Activated CD4-positive, alpha-beta memory T cell treated with anti-CD3 and anti-CD28 coated beads for 36 hours (primary cell): ENCODE measurements at regions of chr15 and their contacts with region 1.

Region 1: GRCh38 chr15:78437762-78438302 is at the start of gene IREB2:
- DNase-seq: peak; percentile 99
- H3K4me3 Mint-ChIP-seq: peak within 1 kb of the TSS; percentile 97
- H3K27ac Mint-ChIP-seq: peak within 1 kb of the TSS; percentile 97
- H3K4me1 Mint-ChIP-seq: peaks cover 36% of the 10 kb centered on the region
- H3K27me3 Mint-ChIP-seq: no peaks in the 10 kb centered on the region
- total RNA-seq, gene IREB2: 52.8 to 53.7 TPM

Region 2: GRCh38 chr15:78034495-78035191 is 403.2 kb before region 1 on chr15:
- CTCF ChIA-PET with region 1: no interaction called
- POLR2A ChIA-PET with region 1: no interaction called
- intact Hi-C with region 1: no loop called
- DNase-seq: peak; percentile 94
- H3K4me3 Mint-ChIP-seq: peak overlapping the region; percentile 43
- H3K27ac Mint-ChIP-seq: peak overlapping the region; percentile 73
- H3K4me1 Mint-ChIP-seq: peaks cover 85% of the 10 kb centered on the region
- H3K27me3 Mint-ChIP-seq: no peaks in the 10 kb centered on the region

Region 3: DNA sequence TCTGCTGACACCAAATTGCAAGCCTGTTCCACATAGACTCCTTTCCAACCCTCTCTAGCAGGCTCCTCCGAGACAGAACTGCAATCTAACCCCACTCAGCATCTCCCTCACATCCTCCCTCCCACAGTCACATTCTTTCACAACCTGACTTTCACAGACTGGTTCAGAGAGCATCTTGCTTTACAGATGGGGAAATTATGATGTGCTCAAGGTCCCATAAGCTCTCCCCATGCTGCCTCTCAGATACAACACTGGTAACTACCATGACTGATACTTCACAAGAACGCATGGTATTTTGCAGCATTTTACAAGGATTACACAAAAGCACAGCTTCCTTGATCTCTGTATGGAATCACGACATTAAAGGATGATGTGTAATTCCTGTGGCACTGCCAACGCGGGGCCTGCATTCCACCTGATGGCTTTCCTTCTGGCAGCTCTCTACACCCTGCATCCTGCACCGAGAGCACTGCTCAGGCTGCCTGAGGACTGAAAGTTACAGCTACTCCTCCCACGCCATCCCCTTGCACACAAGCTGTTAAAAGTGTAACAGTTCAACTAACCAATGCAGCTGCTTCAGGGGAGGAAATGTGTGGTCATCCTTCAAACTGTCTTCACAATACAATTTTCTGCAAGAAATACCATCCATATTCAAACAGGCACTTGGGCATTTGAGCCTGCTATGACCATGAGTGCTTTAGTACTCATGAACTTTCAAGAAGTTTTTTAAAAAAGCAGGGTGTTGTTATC is 388.0 kb before region 1 on chr15:
- CTCF ChIA-PET with region 1: no interaction called
- POLR2A ChIA-PET with region 1: no interaction called
- intact Hi-C with region 1: loop called (anchors 5 kb)
- DNase-seq: peak; percentile 83
- H3K4me3 Mint-ChIP-seq: peak overlapping the region; percentile 30
- H3K27ac Mint-ChIP-seq: peak overlapping the region; percentile 92
- H3K4me1 Mint-ChIP-seq: peaks cover 99% of the 10 kb centered on the region
- H3K27me3 Mint-ChIP-seq: no peaks in the 10 kb centered on the region

Region 4: GRCh38 chr15:78264304-78265136 is 173.3 kb before region 1 on chr15 and contains the start of gene DNAJA4:
- CTCF ChIA-PET with region 1: interaction called, 4 read pairs
- POLR2A ChIA-PET with region 1: interaction called, 13 read pairs
- intact Hi-C with region 1: no loop called
- DNase-seq: peak; percentile 66
- H3K4me3 Mint-ChIP-seq: peak within 1 kb of the TSS; percentile 78
- H3K27ac Mint-ChIP-seq: peak within 1 kb of the TSS; percentile 75
- H3K4me1 Mint-ChIP-seq: peaks cover 25% of the 10 kb centered on the region
- H3K27me3 Mint-ChIP-seq: no peaks in the 10 kb centered on the region
- total RNA-seq, gene DNAJA4: 36.3 to 39.6 TPM

Region 5: GRCh38 chr15:78389322-78389721 is 48.5 kb before region 1 on chr15:
- CTCF ChIA-PET with region 1: no interaction called
- POLR2A ChIA-PET with region 1: no interaction called
- intact Hi-C with region 1: no loop called
- DNase-seq: no peak
- H3K4me3 Mint-ChIP-seq: no peak overlapping the region
- H3K27ac Mint-ChIP-seq: no peak overlapping the region
- H3K4me1 Mint-ChIP-seq: no peaks in the 10 kb centered on the region
- H3K27me3 Mint-ChIP-seq: peaks cover 20% of the 10 kb centered on the region

Region 6: DNA sequence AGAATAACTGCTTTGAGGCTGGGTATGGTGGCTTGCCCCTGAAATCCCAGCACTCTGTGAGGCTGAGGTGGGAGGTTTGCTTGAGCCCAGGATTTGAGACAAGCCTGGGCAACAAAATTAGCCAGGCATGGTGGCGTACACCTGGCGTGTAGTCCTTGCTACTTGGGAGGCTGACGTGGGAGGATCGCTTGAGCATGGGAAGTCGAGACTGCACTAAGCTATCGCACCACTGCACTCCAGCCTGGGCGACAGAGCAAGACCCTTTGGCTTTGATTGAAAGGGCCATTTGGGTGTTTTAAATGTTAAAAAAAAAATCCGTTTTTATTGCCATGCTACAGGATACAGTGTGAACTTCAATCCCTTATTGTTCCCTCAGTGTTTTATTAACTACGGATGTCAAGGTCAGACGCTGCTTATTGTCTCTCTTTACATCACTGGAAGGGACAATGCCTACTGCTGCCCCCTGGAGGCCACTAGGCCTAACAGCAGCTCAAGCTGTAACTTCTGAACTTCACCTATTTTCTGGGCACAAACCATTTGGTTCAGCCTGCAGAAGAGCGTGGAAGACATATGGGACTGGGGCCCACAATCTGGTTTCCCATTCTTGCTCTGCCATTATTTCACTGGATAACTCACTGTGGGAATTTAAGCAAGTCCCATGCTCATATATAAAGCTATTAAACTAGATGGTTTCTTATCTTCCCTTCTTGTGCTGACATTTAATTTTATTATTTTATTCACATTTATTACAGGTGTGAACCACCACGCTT is 15.1 kb before region 1 on chr15:
- CTCF ChIA-PET with region 1: interaction called, 14 read pairs
- POLR2A ChIA-PET with region 1: interaction called, 7 read pairs
- intact Hi-C with region 1: no loop called
- DNase-seq: peak; percentile 76
- H3K4me3 Mint-ChIP-seq: no peak overlapping the region
- H3K27ac Mint-ChIP-seq: no peak overlapping the region
- H3K4me1 Mint-ChIP-seq: peaks cover 17% of the 10 kb centered on the region
- H3K27me3 Mint-ChIP-seq: peaks cover 4% of the 10 kb centered on the region

Region 7: GRCh38 chr15:78540141-78540928 is 102.5 kb after region 1 on chr15 and contains the start of gene PSMA4:
- CTCF ChIA-PET with region 1: interaction called, 9 read pairs
- POLR2A ChIA-PET with region 1: interaction called, 30 read pairs
- intact Hi-C with region 1: loop called (anchors 1 kb)
- DNase-seq: peak; percentile 95
- H3K4me3 Mint-ChIP-seq: peak within 1 kb of the TSS; percentile 87
- H3K27ac Mint-ChIP-seq: peak within 1 kb of the TSS; percentile 91
- H3K4me1 Mint-ChIP-seq: peaks cover 25% of the 10 kb centered on the region
- H3K27me3 Mint-ChIP-seq: peaks cover 3% of the 10 kb centered on the region
- total RNA-seq, gene PSMA4: 220 to 226 TPM